Heart right ventricle (tissue), 16 donors: ENCODE measurements at regions of chr4 and their contacts with region 1.

Region 1: DNA sequence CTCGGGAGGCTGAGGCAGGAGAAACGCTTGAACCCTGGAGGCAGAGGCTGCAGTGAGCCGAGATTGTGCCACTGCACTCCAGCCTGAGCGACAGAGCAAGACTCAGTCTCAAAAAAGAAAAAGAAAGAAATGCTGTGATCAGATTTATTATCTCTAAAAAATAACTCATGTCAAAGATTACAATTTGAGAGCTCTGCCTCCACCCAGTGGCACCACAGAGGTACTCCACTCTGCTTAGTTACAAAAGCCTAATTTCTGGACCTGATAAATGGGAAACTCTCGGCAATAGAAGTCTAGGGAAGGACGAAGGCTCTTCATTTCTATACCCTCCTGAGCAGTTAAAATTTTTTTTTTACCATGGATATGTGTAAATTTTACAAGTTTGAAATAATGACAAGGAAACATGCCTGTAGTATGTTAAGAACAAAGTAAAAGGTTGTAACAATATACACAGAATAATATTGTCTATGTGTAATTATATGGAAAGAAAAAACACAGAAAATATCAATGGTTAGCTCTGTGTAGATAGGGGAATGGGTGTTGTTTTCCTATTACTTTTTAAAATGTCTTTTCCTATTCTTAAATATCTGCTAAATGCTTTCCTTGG is 149.8 kb downstream of the STIM2 start:
- DNase-seq: peak; percentile 50 to 52
- ATAC-seq: peak in 7 of 8 donors; percentile 64 to 89 (median 74)
- H3K4me3 ChIP-seq: no peak overlapping the region
- H3K27ac ChIP-seq: peak overlapping the region in 1 of 10 donors; percentile 20
- H3K4me1 ChIP-seq: peaks cover 0 to 26% (median 8%) of the 10 kb centered on the region in 9 donors
- H3K27me3 ChIP-seq: no peaks in the 10 kb centered on the region
- CTCF ChIP-seq: peak; percentile 86 to 95 (median 89)

Region 2: GRCh38 chr4:26022346-26023202 is 987.9 kb before region 1 on chr4:
- intact Hi-C with region 1: loop called in 1 of 10 experiments (anchors 5 kb)
- DNase-seq: no peak
- ATAC-seq: peak; percentile 13 to 57 (median 34)
- H3K4me3 ChIP-seq: no peak overlapping the region
- H3K27ac ChIP-seq: peak overlapping the region in 1 of 10 donors; percentile 1
- H3K4me1 ChIP-seq: peaks cover 0 to 27% (median 17%) of the 10 kb centered on the region in 9 donors
- H3K27me3 ChIP-seq: no peaks in the 10 kb centered on the region
- CTCF ChIP-seq: no peak

Region 3: GRCh38 chr4:26459054-26459755 is 551.2 kb before region 1 on chr4:
- intact Hi-C with region 1: loop called in 9 of 10 experiments (anchors 1 to 10 kb)
- DNase-seq: no peak
- ATAC-seq: peak in 3 of 8 donors; percentile 54 to 62 (median 58)
- H3K4me3 ChIP-seq: no peak overlapping the region
- H3K27ac ChIP-seq: no peak overlapping the region
- H3K4me1 ChIP-seq: peaks cover 0 to 8% (median 0%) of the 10 kb centered on the region in 9 donors
- H3K27me3 ChIP-seq: peaks cover 0 to 13% (median 0%) of the 10 kb centered on the region in 7 donors
- CTCF ChIP-seq: peak; percentile 33 to 71 (median 62)

Region 4: DNA sequence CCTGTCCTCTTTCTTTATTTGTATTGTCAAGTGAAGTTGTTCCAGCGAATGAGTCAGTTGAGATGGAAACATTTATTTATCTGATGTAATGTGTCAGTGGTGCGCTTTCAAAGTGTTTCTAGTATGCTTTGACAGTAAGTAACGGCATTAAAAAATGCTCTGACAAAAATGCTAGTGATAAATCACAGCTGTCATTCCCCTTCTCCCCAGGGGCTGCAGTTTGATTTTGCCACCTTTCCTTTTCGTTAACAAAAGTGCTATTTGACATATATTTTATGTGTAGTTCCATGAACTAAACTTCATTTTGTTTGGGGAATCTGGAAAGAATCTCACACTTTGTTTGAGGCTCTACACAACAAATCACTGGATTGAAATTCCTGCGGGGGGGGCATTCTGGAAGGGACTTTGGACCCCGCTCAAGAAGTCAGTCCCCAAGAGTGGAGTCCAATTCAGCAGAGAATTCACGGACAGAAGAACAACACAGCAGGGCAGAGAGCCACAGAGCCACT is 434.2 kb before region 1 on chr4:
- intact Hi-C with region 1: loop called in 4 of 10 experiments (anchors 5 to 10 kb)
- DNase-seq: peak; percentile 12 to 22
- ATAC-seq: peak in 3 of 8 donors; percentile 31 to 73 (median 52)
- H3K4me3 ChIP-seq: no peak overlapping the region
- H3K27ac ChIP-seq: no peak overlapping the region
- H3K4me1 ChIP-seq: peaks cover 0 to 11% (median 0%) of the 10 kb centered on the region in 9 donors
- H3K27me3 ChIP-seq: peaks cover 0 to 9% (median 0%) of the 10 kb centered on the region in 7 donors
- CTCF ChIP-seq: no peak

Region 5: DNA sequence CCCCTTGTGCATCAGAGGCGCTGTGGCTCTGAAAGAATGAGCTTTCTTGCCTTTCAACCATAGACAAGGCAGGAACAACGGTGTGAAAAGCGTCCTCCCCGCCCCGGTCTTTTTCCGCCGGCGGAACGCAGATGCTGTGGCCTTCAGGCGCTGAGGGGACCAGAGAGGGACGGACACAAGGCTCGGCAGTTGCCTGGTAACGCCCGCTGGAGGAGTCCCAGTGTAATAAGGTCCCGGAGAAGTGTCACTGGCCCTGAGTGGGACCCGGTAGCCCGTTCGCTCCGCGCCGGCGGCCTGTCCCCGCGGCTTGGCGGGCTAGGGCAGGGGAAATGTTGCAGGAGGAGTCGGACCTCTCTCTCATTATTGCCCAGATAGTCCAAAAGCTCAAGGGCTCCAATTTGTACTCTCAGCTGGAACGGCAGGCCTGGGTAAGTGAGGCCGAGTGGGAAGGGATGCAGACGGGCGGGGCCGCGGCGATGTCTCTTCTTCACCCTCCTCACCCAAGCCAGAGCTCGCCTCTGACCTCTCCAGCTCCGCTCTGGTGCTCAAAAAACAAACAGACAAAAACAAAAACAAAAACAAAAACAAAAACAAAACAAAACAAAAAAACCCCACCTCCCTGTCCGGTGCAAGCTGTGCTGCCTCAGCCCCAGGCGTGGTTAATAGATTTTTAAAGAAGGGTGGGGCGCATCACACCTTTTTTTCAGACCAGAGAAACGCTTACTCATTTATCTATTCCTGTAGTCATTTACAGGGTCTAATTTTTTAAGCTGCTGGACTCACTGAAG is 426.4 kb before region 1 on chr4 and contains the start of gene TBC1D19:
- intact Hi-C with region 1: loop called in 4 of 10 experiments (anchors 5 to 10 kb)
- DNase-seq: peak; percentile 86 to 87
- ATAC-seq: peak; percentile 99 to 100 (median 100)
- H3K4me3 ChIP-seq: peak within 1 kb of the TSS; percentile 40 to 89 (median 80)
- H3K27ac ChIP-seq: peak within 1 kb of the TSS in 9 of 10 donors; percentile 59 to 86 (median 76)
- H3K4me1 ChIP-seq: peaks cover 0 to 24% (median 15%) of the 10 kb centered on the region in 9 donors
- H3K27me3 ChIP-seq: no peaks in the 10 kb centered on the region
- CTCF ChIP-seq: no peak
- total RNA-seq, gene TBC1D19: 6.1 to 10.7 (median 9.7) TPM

Region 6: GRCh38 chr4:26787461-26788340 is 222.7 kb before region 1 on chr4:
- intact Hi-C with region 1: loop called in 7 of 10 experiments (anchors 2 to 10 kb)
- DNase-seq: peak; percentile 36 to 69
- ATAC-seq: peak; percentile 72 to 87 (median 80)
- H3K4me3 ChIP-seq: peak overlapping the region in 4 of 10 donors; percentile 1 to 18 (median 13)
- H3K27ac ChIP-seq: peak overlapping the region in 9 of 10 donors; percentile 23 to 68 (median 59)
- H3K4me1 ChIP-seq: peaks cover 2 to 39% (median 22%) of the 10 kb centered on the region in 9 donors
- H3K27me3 ChIP-seq: no peaks in the 10 kb centered on the region
- CTCF ChIP-seq: peak in 8 of 9 donors; percentile 31 to 71 (median 49)

Region 7: DNA sequence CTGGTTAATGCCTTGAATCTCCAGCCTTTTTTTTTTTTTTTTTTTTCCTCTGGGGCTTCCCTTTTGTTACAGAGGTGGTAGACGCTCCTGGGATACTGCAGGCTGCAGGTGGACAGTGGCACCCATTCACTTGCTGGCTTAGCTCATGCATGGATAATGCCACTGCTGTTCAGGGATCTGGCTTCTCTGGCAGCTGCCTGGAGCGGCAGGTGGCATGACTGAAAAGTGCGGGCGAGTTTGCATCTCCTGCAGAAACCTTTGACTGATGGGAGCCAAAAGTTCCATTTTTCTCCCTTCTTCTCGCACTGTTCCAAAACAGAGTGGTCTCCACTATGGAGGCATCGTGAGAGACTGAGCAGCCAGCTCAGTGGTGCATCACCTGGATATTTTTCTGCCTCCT is 155.7 kb before region 1 on chr4:
- intact Hi-C with region 1: no loop called
- DNase-seq: no peak
- ATAC-seq: no peak
- H3K4me3 ChIP-seq: no peak overlapping the region
- H3K27ac ChIP-seq: no peak overlapping the region
- H3K4me1 ChIP-seq: peaks cover 7 to 28% (median 21%) of the 10 kb centered on the region in 9 donors
- H3K27me3 ChIP-seq: no peaks in the 10 kb centered on the region
- CTCF ChIP-seq: no peak